ENCODE measurements at regions of chr10 and their contacts with region 1.

Region 1: GRCh38 chr10:118986815-118987790 is 42.4 kb upstream of the NANOS1 start:
- DNase-seq: no peak

Region 2: DNA sequence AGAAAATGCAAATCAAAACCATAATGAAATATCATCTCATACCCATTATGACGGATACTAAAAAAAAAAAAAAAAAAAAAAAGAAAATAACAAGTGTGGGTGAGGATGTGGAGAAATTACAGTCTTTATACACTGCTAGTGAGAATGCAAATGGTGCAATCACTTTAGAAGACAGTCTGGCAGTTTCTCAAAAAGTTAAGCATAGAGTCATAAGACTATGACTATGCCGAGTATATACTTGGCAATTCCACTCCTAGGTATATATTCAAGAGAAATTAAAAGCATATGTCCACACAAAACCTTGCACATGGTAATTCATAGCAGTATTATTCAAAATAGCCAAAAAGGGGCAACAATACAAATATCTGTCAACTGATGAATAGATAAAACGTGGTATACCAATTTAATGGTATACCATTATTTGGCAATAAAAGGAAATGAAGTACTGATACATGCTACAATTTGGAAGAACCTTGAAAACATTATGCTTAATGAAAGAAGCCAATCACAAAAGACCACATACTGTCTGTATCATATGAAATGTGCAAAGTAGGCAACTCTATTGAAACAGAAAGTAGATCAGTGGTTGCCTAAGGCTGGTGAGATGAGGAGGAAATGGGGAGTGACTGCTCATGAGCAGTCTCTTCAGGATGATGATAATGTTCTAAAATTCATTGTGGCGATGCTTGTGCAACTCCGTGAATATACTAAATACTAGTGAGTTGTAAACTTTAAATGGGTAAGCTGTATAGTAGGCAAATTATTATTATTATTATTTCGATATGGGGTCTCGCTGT is 47.7 kb before region 1 on chr10:
- intact Hi-C with region 1: loop called in 1 of 2 experiments (anchors 1 kb)
- DNase-seq: no peak

Region 3: GRCh38 chr10:118958984-118959916 is 27.9 kb before region 1 on chr10:
- intact Hi-C with region 1: no loop called
- DNase-seq: peak; percentile 78

Region 4: GRCh38 chr10:119299531-119299930 is 312.4 kb after region 1 on chr10:
- intact Hi-C with region 1: loop called in 1 of 2 experiments (anchors 5 kb)
- DNase-seq: no peak